Caco-2 (cell line): ENCODE measurements at regions of chr14 and their contacts with region 1.

Region 1: DNA sequence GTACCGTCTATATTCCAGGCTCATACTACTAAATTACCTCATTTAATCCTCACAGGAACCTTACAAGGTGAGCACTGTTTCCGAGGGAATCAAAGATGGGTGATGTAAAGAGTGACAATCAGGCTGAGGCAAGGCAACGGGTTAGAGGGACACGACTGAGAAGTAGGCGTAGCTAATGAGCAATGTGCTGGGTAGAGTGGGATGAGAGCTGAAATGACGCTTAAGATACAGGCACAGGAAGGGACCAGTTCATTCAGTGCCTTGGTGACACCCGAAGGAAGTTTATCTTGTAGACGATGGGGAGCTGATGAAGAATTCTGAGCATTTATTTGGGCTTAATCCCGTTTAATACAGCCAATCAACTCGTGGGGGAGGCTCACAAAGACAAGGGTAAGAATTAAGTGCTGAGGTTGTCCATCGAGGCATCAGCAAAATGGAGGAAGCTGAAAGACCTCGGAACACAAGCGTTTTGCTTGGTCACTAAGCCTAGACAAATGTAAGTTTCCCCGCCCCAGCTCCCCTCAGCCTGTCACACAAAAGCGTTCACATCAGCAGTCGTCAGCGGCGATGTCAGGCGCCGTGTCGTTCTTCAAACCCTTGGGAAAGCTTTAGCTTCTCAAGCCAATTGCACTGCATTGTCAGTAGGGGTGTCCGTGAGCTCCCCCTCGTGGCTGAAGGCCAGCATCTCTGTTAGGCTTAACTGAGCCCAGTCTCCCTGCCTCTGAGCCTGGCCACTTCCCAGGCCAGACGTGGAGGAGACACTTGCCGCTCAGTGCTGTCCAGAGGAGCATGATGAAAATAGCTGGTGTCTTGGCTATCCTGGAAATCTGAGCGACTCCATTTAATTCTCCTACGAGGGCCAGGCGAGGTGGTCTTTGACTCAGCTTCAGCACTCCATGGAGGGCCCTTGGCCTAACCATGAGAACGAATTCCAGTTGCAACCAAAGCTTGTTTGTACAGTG is 288.5 kb upstream of the G2E3 start:
- DNase-seq: peak; percentile 75 to 80
- H3K4me3 ChIP-seq: no peak overlapping the region
- H3K4me3 Mint-ChIP-seq: no peak overlapping the region
- H3K27ac Mint-ChIP-seq: no peak overlapping the region
- H3K4me1 ChIP-seq: no peaks in the 10 kb centered on the region
- H3K4me1 Mint-ChIP-seq: no peaks in the 10 kb centered on the region
- H3K27me3 ChIP-seq: no peaks in the 10 kb centered on the region
- H3K27me3 Mint-ChIP-seq: no peaks in the 10 kb centered on the region
- CTCF ChIP-seq: peak; percentile 89 to 94

Region 2: DNA sequence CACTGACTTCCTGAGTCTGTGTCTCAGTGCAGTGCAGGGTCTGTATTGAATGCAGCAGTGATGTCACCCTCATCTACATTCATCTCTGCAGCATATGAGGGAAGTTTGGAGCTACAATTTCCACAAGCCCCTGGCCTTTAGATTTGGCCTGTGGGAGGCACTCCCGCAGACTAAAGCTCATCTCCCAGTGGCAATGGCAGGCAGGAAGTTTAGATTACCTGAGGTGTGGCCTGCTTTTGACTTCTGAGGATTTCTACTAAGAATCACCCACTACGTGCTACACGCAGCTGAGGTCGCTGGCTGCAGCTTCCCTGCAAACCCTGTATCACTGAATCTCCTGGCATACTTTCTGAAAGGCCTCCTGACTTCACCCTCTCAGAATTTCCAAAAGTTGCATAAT is 140.7 kb before region 1 on chr14:
- CTCF ChIA-PET with region 1: no interaction called
- POLR2A ChIA-PET with region 1: no interaction called
- intact Hi-C with region 1: loop called (anchors 10 kb)
- DNase-seq: no peak
- H3K4me3 ChIP-seq: no peak overlapping the region
- H3K4me3 Mint-ChIP-seq: no peak overlapping the region
- H3K27ac Mint-ChIP-seq: no peak overlapping the region
- H3K4me1 ChIP-seq: no peaks in the 10 kb centered on the region
- H3K4me1 Mint-ChIP-seq: no peaks in the 10 kb centered on the region
- H3K27me3 ChIP-seq: no peaks in the 10 kb centered on the region
- H3K27me3 Mint-ChIP-seq: no peaks in the 10 kb centered on the region
- CTCF ChIP-seq: no peak

Region 3: DNA sequence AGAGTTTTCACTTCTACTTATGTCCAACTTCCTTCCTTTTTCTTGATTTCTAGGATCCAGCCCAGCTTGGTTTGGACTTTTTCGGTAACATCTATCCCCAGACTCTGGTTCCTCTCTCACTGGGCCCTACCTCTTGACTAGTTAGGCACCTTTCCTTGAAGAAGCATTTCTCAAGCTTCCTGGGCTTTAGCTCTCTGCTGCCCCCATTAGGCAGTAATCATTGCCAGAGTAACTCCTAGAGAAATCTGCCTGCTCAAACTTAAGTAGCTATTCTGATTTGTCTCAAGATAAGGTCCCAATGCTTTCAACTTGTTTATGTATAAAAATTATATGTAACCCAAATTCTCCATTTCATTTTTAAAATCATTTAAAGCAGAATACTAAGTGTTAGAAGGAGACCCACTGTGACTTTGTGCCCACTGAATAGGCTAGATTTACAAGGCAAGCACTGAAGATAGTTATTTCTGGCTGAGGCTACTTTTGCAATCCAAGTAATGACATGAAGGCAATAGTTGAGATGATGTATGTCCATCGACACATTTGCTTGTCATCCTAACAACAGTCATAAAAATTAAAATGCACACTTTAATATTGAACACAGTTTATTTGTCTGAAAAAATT is 13.5 kb after region 1 on chr14:
- CTCF ChIA-PET with region 1: interaction called, 16 read pairs
- POLR2A ChIA-PET with region 1: no interaction called
- intact Hi-C with region 1: no loop called
- DNase-seq: peak; percentile 48 to 52
- H3K4me3 ChIP-seq: no peak overlapping the region
- H3K4me3 Mint-ChIP-seq: no peak overlapping the region
- H3K27ac Mint-ChIP-seq: no peak overlapping the region
- H3K4me1 ChIP-seq: no peaks in the 10 kb centered on the region
- H3K4me1 Mint-ChIP-seq: no peaks in the 10 kb centered on the region
- H3K27me3 ChIP-seq: no peaks in the 10 kb centered on the region
- H3K27me3 Mint-ChIP-seq: no peaks in the 10 kb centered on the region
- CTCF ChIP-seq: peak; percentile 54 to 73